Left lung (tissue), 14 donors: ENCODE measurements at regions of chr16 and their contacts with region 1.

Region 1: DNA sequence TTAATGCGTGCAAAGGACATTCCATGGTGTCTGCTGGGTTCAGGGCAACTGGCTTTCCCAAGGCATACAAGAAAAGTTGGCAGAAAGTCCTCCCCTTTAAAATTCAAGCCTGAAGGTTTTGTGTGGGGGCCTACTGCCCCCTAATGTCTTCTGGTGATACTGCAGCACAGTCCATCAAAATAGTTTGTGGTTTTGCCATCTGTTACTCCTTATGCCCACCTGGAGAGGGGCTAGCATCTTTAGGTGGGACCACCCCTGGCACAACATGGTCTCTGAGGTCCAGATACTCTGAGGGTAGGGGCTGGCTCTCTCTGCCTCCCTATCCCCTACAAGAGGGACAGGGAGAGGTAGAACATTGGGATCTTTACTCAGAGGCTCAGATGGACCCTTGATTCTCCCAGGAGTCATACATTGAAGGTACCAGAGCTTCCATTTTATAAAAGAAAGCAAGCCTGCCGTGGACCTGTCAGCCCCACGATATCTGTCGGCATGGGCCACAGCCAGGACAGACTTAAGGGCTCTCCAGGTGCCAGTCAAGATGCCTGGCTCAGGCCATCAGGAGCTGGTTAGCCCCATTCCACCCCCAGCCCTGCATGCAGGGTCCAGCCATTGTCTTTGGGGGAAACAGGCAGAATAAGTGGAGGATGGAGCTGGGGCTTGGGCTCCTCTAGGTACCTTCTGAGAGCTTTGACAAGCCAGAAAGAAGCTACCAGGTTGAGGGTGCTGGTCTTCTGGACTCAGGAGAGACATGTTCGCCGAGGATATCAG is 6.3 kb downstream of the ESRP2 start:
- DNase-seq: peak in 2 of 4 donors; percentile 29 to 66
- ATAC-seq: peak; percentile 39
- H3K4me3 ChIP-seq: no peak overlapping the region
- H3K27ac ChIP-seq: no peak overlapping the region
- H3K4me1 ChIP-seq: peaks cover 0 to 24% of the 10 kb centered on the region in 2 donors
- H3K27me3 ChIP-seq: no peaks in the 10 kb centered on the region
- CTCF ChIP-seq: peak; percentile 72 to 89

Region 2: GRCh38 chr16:68093816-68094613 is 135.6 kb before region 1 on chr16:
- intact Hi-C with region 1: loop called in 1 of 2 experiments (anchors 10 kb)
- DNase-seq: no peak
- ATAC-seq: peak; percentile 59
- H3K4me3 ChIP-seq: no peak overlapping the region
- H3K27ac ChIP-seq: no peak overlapping the region
- H3K4me1 ChIP-seq: peaks cover 23 to 66% of the 10 kb centered on the region in 2 donors
- H3K27me3 ChIP-seq: no peaks in the 10 kb centered on the region
- CTCF ChIP-seq: no peak